Cardiac septum (tissue), 1 donor: ENCODE measurements at regions of chr5 and their contacts with region 1.

Region 1: GRCh38 chr5:43556857-43557542 is at the start of gene PAIP1:
- DNase-seq: peak; percentile 89
- total RNA-seq, gene PAIP1: 118 TPM

Region 2: DNA sequence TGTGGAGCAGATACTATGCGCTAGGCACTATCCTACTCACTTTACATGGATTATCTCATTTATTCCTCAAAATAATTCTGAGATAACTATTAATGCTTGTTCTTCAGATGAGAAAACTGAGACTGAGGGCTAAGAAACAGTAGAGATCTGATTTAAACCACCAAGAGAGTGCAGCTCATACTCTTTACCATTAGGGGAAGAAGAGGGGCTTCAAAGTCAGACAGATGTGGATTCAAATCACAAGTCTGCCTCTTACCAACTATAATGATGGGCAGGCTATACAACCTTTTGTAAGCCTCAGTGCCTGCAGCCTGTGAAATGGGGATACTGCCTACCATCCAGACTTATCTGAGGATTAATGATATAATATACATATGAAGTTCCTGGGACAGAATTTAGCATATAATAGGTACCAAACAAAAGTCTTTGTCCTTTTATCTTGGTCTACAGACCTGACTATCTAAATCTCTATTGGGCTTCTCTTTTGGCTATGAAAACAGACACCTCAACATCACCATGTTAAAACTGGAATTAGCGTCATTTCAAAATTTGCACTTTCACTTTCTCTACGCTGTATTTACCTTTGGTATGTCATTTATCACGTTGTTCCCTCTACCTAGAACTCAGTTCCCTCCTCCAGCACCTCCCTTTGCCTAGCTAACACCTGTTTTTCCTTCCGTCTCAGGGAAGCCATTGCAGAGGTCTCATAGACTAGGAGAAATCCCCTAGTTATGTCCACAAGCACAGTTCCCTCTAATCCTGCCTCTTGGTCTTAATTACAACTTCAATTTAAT is 59.5 kb before region 1 on chr5:
- intact Hi-C with region 1: no loop called
- DNase-seq: no peak

Region 3: GRCh38 chr5:43514816-43515677 is 42.0 kb before region 1 on chr5 and contains the start of gene C5orf34:
- intact Hi-C with region 1: loop called (anchors 5 kb)
- DNase-seq: peak; percentile 98
- total RNA-seq, gene C5orf34: 0.22 TPM

Region 4: GRCh38 chr5:43602461-43603343 is 45.7 kb after region 1 on chr5 and contains the start of gene NNT:
- intact Hi-C with region 1: loop called (anchors 1 kb)
- DNase-seq: peak; percentile 93
- total RNA-seq, gene NNT: 396 TPM

Region 5: GRCh38 chr5:43631182-43631910 is 74.3 kb after region 1 on chr5:
- intact Hi-C with region 1: loop called (anchors 2 kb)
- DNase-seq: no peak